ENCODE measurements at regions of chr18 and their contacts with region 1.

Region 1: GRCh38 chr18:31424383-31424988 is 23.1 kb upstream of the DSG3 start:
- DNase-seq: peak; percentile 31
- CTCF ChIP-seq: peak; percentile 68

Region 2: GRCh38 chr18:31302963-31303362 is 121.5 kb before region 1 on chr18:
- CTCF ChIA-PET with region 1: no interaction called
- POLR2A ChIA-PET with region 1: no interaction called
- DNase-seq: no peak
- CTCF ChIP-seq: no peak

Region 3: GRCh38 chr18:31401156-31402025 is 23.1 kb before region 1 on chr18:
- CTCF ChIA-PET with region 1: interaction called, 21 read pairs
- POLR2A ChIA-PET with region 1: no interaction called
- DNase-seq: no peak
- CTCF ChIP-seq: no peak

Region 4: GRCh38 chr18:31410716-31411483 is 13.6 kb before region 1 on chr18:
- CTCF ChIA-PET with region 1: interaction called, 21 read pairs
- POLR2A ChIA-PET with region 1: no interaction called
- DNase-seq: no peak
- CTCF ChIP-seq: no peak

Region 5: DNA sequence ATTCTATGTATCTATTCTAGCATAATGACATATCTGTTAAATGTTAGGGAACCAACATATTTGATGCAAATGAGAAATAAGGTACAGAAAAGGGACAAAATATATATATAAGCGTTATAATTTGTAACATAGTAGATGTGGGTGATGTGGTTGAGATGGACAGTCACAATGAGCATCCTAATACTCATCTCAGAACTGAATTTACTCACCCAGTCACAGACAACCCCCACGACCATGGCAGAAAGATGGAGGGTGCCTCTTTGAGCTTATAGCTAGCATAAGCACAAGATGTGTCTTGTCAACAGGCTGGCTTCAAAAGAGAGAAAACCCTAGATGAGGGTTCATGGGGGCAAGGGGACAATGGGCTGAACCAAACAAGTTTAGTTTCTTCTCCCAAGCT is 13.9 kb after region 1 on chr18:
- CTCF ChIA-PET with region 1: interaction called, 41 read pairs
- POLR2A ChIA-PET with region 1: no interaction called
- DNase-seq: peak; percentile 19
- CTCF ChIP-seq: no peak

Region 6: DNA sequence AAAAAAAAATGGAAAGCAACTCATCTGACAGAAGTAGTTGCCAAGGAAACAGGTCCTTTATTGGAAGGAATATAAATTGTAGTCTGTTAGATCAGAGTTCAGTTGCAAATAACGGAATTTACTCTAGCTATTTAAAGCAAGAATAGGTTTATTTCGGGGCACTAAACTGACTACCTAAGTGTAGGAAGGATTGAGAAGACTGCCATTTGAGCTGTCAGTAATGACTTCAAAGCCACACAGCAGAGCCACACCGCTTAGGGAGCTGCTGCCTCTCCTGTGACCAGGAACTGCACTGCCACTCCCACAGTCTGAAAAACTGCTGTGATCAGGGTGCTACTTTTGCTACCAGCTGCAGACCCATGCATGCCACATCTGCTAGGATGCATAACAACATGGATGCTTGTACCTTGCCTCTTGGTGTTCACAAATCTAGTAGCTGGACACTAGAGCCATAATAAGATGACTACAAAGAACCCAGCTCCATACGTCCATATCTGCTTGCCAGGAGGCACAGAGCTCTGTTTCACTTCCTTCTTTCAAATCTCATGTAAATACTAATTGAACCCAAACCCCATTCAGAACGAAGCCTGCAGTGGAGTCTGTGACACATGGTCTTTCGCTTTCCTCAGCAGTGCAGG is 75.7 kb after region 1 on chr18:
- CTCF ChIA-PET with region 1: interaction called, 12 read pairs
- POLR2A ChIA-PET with region 1: no interaction called
- DNase-seq: peak; percentile 65
- CTCF ChIP-seq: no peak

Region 7: GRCh38 chr18:31563778-31564177 is 139.3 kb after region 1 on chr18:
- CTCF ChIA-PET with region 1: interaction called, 11 read pairs
- POLR2A ChIA-PET with region 1: no interaction called
- DNase-seq: peak; percentile 21
- CTCF ChIP-seq: peak; percentile 7

Region 8: GRCh38 chr18:31920277-31920676 is 495.8 kb after region 1 on chr18:
- CTCF ChIA-PET with region 1: no interaction called
- POLR2A ChIA-PET with region 1: no interaction called
- DNase-seq: no peak
- CTCF ChIP-seq: no peak

Measured in GM10248 (cell line).